Prostate gland (tissue), 2 donors: ENCODE measurements at regions of chr10 and their contacts with region 1.

Region 1: GRCh38 chr10:110871298-110872084 is at the start of gene PDCD4:
- DNase-seq: peak; percentile 99
- H3K4me3 ChIP-seq: peak within 1 kb of the TSS; percentile 93 to 99
- H3K27ac ChIP-seq: peak within 1 kb of the TSS; percentile 99 to 100
- H3K4me1 ChIP-seq: peaks cover 13% of the 10 kb centered on the region
- H3K27me3 ChIP-seq: no peaks in the 10 kb centered on the region
- CTCF ChIP-seq: no peak
- POLR2A ChIP-seq: peak; percentile 96
- total RNA-seq, gene PDCD4: 104 to 120 TPM

Region 2: GRCh38 chr10:110820321-110820814 is 51.1 kb before region 1 on chr10:
- intact Hi-C with region 1: loop called (anchors 5 kb)
- DNase-seq: peak; percentile 79
- H3K4me3 ChIP-seq: no peak overlapping the region
- H3K27ac ChIP-seq: peak overlapping the region; percentile 85 to 86
- H3K4me1 ChIP-seq: peaks cover 46% of the 10 kb centered on the region
- H3K27me3 ChIP-seq: no peaks in the 10 kb centered on the region
- CTCF ChIP-seq: no peak
- POLR2A ChIP-seq: no peak

Region 3: GRCh38 chr10:110834629-110835301 is 36.7 kb before region 1 on chr10:
- intact Hi-C with region 1: loop called (anchors 5 kb)
- DNase-seq: peak; percentile 72
- H3K4me3 ChIP-seq: no peak overlapping the region
- H3K27ac ChIP-seq: peak overlapping the region; percentile 71 to 90
- H3K4me1 ChIP-seq: peaks cover 40% of the 10 kb centered on the region
- H3K27me3 ChIP-seq: no peaks in the 10 kb centered on the region
- CTCF ChIP-seq: no peak
- POLR2A ChIP-seq: no peak

Region 4: GRCh38 chr10:111440501-111440900 is 569.0 kb after region 1 on chr10:
- intact Hi-C with region 1: no loop called
- DNase-seq: no peak
- H3K4me3 ChIP-seq: no peak overlapping the region
- H3K27ac ChIP-seq: no peak overlapping the region
- H3K4me1 ChIP-seq: no peaks in the 10 kb centered on the region
- H3K27me3 ChIP-seq: no peaks in the 10 kb centered on the region
- CTCF ChIP-seq: no peak
- POLR2A ChIP-seq: no peak